RWPE1 (cell line): ENCODE measurements at regions of chr4 and their contacts with region 1.

Region 1: GRCh38 chr4:77665381-77666069 is 59.9 kb downstream of the CXCL13 start:
- DNase-seq: no peak
- H3K27ac ChIP-seq: no peak overlapping the region
- CTCF ChIP-seq: no peak

Region 2: GRCh38 chr4:77681792-77682191 is 16.3 kb after region 1 on chr4:
- CTCF ChIA-PET with region 1: no interaction called
- POLR2A ChIA-PET with region 1: interaction called, 11 read pairs
- DNase-seq: no peak
- H3K27ac ChIP-seq: no peak overlapping the region
- CTCF ChIP-seq: no peak